Activated naive CD4-positive, alpha-beta T cell treated with anti-CD3 and anti-CD28 coated beads for 36 hours (primary cell): ENCODE measurements at regions of chr13 and their contacts with region 1.

Region 1: DNA sequence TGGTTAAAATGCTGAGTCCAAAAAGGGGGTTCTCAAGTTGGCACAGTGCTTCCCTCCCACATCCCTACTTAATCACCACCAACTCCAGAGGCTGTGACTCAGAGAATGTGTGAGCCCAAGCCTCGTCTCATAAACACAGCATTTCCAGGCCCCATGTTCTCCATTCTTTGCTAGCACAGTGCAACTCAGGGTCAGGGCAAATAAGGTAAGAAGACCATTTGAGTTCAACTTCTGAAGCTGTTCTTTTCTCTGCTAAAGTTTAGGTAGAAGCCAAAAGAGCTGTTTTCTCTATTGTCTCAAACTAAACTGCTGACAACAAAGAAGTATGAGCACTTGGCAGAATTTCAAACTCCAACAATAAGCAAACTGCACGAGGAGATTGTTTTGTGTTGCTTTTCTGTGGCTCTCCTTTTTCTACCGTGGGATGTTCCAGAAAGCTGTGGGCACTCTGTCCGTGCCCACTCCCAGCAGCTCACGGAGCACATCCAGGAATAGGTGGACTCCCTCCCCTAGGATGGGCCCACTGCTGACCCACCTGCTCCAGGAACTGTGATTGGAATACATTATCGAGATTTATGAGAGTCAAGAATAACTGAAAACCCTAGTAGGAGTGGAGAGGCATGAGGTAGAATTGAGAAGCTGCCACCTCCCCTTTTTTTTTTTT is 494.3 kb downstream of the COG6 start:
- DNase-seq: peak; percentile 37
- H3K4me3 Mint-ChIP-seq: no peak overlapping the region
- H3K27ac Mint-ChIP-seq: peak overlapping the region; percentile 52
- H3K4me1 Mint-ChIP-seq: peaks cover 73% of the 10 kb centered on the region
- H3K27me3 Mint-ChIP-seq: no peaks in the 10 kb centered on the region

Region 2: GRCh38 chr13:39777527-39778061 is 372.1 kb before region 1 on chr13:
- CTCF ChIA-PET with region 1: no interaction called
- intact Hi-C with region 1: loop called (anchors 5 kb)
- DNase-seq: peak; percentile 70
- H3K4me3 Mint-ChIP-seq: no peak overlapping the region
- H3K27ac Mint-ChIP-seq: peak overlapping the region; percentile 80
- H3K4me1 Mint-ChIP-seq: peaks cover 46% of the 10 kb centered on the region
- H3K27me3 Mint-ChIP-seq: no peaks in the 10 kb centered on the region

Region 3: DNA sequence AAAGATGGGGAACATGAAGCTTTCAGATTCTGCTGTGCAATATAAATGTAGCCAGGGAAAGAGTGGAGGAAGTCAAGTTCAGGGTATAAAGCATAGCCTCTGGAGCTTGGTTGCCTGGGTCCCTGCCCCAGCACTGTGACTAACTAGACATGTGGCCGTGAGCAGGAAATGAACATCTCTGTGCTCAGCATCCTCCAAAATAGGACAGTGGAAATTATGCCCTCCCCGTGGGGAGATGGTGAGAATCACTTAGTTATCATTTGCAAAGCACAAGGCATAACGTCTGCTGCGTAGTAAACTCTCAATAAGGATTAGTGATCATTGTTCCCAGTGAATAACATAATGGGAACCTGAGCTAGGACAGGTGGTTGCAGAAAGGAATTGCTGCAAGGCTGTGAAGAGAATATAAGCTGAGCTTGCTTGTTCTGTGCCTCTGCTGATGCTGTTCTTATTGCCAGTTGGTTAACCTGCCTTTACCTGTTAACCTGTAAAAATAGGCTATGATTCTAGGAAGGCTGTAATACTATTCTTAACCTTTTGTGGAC is 53.3 kb before region 1 on chr13:
- CTCF ChIA-PET with region 1: interaction called, 3 read pairs
- intact Hi-C with region 1: loop called (anchors 1 kb)
- DNase-seq: peak; percentile 75
- H3K4me3 Mint-ChIP-seq: no peak overlapping the region
- H3K27ac Mint-ChIP-seq: peak overlapping the region; percentile 20
- H3K4me1 Mint-ChIP-seq: peaks cover 30% of the 10 kb centered on the region
- H3K27me3 Mint-ChIP-seq: no peaks in the 10 kb centered on the region

Region 4: DNA sequence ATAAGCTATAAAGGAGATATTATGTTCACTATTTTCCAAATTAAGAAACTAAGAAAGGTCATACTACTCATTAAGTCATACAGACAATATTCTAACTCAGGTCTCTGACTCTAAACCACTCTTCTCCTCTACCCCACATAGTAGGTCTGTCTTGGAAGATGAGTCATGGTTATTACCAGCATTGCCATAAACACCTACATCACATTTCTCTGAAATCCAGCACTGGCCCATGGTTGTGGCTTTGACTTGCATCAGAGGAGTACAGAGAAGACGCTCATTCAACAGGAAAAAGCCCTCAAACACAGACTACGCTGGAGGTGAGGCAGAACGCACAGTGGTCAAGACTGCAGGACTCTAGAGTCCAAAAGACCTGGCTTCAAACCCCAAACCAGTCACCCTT is 17.5 kb before region 1 on chr13:
- CTCF ChIA-PET with region 1: interaction called, 3 read pairs
- intact Hi-C with region 1: loop called (anchors 1 kb)
- DNase-seq: peak; percentile 87
- H3K4me3 Mint-ChIP-seq: no peak overlapping the region
- H3K27ac Mint-ChIP-seq: peak overlapping the region; percentile 66
- H3K4me1 Mint-ChIP-seq: peaks cover 25% of the 10 kb centered on the region
- H3K27me3 Mint-ChIP-seq: no peaks in the 10 kb centered on the region

Region 5: DNA sequence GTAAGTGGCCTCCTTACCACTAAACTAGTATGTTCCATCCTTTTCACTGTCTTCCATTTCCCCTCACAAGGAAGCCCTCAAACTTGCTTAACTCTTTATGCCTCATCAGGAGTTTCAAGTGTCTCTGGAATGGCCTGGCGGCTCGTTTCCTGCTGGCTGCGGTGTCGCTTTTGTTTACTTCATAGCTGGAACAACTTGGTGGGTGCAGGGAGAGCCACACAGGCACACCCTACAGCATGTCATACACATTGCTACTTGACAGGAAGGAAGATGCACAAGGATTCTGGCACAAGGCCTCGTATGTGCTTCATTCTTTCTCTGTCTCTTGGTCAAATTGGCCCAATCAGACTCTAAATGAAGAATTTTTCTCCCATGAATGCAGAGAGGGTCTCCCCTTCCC is 28.4 kb after region 1 on chr13:
- CTCF ChIA-PET with region 1: no interaction called
- intact Hi-C with region 1: no loop called
- DNase-seq: peak; percentile 45
- H3K4me3 Mint-ChIP-seq: no peak overlapping the region
- H3K27ac Mint-ChIP-seq: no peak overlapping the region
- H3K4me1 Mint-ChIP-seq: peaks cover 41% of the 10 kb centered on the region
- H3K27me3 Mint-ChIP-seq: no peaks in the 10 kb centered on the region

Region 6: GRCh38 chr13:40190641-40191100 is 40.9 kb after region 1 on chr13:
- CTCF ChIA-PET with region 1: interaction called, 5 read pairs
- intact Hi-C with region 1: loop called (anchors 1 kb)
- DNase-seq: peak; percentile 91
- H3K4me3 Mint-ChIP-seq: peak overlapping the region; percentile 36
- H3K27ac Mint-ChIP-seq: peak overlapping the region; percentile 81
- H3K4me1 Mint-ChIP-seq: peaks cover 69% of the 10 kb centered on the region
- H3K27me3 Mint-ChIP-seq: no peaks in the 10 kb centered on the region

Region 7: GRCh38 chr13:40213779-40214178 is 64.0 kb after region 1 on chr13:
- CTCF ChIA-PET with region 1: no interaction called
- intact Hi-C with region 1: no loop called
- DNase-seq: no peak
- H3K4me3 Mint-ChIP-seq: no peak overlapping the region
- H3K27ac Mint-ChIP-seq: no peak overlapping the region
- H3K4me1 Mint-ChIP-seq: peaks cover 59% of the 10 kb centered on the region
- H3K27me3 Mint-ChIP-seq: no peaks in the 10 kb centered on the region

Region 8: DNA sequence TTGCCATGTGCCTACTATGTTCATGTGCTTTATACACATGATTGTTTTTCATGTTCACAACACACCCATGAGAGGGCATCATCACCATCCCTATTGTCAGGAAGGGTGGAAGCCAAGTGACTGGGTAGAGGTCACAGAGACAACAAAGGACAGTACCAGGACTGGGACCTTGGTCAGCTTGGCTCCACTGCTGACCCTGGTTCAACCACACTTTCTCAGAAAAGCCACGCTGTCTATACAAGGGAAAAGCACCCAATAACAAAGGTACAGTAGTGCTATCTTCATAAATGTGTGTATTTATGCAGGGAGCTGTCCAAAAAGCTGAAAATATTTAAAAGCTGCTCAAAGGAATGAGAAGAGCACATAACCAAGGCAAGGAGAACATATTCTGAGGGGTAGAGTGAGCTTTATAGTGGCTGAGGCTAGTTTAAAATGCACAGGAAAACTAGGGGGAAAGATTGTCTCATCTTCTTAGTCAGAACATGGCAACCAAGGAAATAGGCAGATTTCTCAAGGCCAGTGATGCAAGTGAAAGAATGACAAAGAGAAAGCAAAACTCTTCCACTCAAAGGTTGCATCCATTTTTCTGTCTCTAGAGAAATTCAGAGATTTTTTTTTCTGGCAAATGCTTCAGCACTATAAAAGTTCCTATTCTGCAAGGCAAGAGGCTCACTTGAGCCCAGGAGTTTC is 101.7 kb after region 1 on chr13:
- CTCF ChIA-PET with region 1: no interaction called
- intact Hi-C with region 1: loop called (anchors 1 kb)
- DNase-seq: peak; percentile 28
- H3K4me3 Mint-ChIP-seq: no peak overlapping the region
- H3K27ac Mint-ChIP-seq: peak overlapping the region; percentile 88
- H3K4me1 Mint-ChIP-seq: peaks cover 52% of the 10 kb centered on the region
- H3K27me3 Mint-ChIP-seq: no peaks in the 10 kb centered on the region

Region 9: DNA sequence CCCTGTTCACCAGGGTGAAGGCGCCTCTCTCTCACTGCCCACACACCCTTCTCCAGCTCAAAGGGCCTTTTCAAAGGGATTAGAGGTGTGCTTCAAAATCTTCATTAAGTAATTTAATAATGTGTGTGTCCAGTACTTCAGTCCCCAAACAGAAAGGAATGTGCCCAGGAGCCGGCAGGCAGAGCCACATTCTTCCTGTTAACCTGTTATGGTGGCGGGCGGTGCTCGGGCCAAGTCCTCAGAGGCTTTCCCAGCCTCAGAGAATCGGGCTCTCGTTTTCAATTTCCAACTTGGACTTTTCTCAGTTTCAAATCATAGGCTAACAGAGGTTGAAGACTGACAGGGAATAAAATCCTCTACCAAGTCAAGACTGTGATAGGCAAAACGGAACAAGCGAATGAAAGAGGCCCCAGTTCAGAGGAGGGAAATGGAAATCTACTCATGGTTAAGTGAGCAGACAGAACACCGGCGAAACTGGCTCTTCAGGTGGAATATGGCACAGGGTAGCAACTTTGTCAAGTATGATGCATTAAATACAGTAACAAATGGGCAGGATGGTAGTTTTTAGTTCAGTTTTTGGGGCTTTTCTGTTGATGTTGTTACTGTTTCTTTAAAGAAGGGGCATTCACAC is 448.1 kb after region 1 on chr13:
- CTCF ChIA-PET with region 1: no interaction called
- intact Hi-C with region 1: loop called (anchors 2 kb)
- DNase-seq: peak; percentile 24
- H3K4me3 Mint-ChIP-seq: peak overlapping the region; percentile 17
- H3K27ac Mint-ChIP-seq: peak overlapping the region; percentile 93
- H3K4me1 Mint-ChIP-seq: peaks cover 90% of the 10 kb centered on the region
- H3K27me3 Mint-ChIP-seq: no peaks in the 10 kb centered on the region